Adrenal gland (tissue), 19 donors: ENCODE measurements at regions of chr13 and their contacts with region 1.

Region 1: GRCh38 chr13:113275387-113275786 is 21.7 kb upstream of the LAMP1 start:
- DNase-seq: peak; percentile 37 to 80 (median 68)
- H3K4me3 ChIP-seq: no peak overlapping the region
- H3K27ac ChIP-seq: no peak overlapping the region
- H3K4me1 ChIP-seq: no peaks in the 10 kb centered on the region
- H3K27me3 ChIP-seq: no peaks in the 10 kb centered on the region
- CTCF ChIP-seq: peak; percentile 40 to 72 (median 62)
- POLR2A ChIP-seq: no peak

Region 2: GRCh38 chr13:113374511-113375175 is 99.3 kb after region 1 on chr13:
- intact Hi-C with region 1: loop called in 1 of 2 experiments (anchors 5 kb)
- DNase-seq: peak in 1 of 7 donors; percentile 36
- H3K4me3 ChIP-seq: no peak overlapping the region
- H3K27ac ChIP-seq: no peak overlapping the region
- H3K4me1 ChIP-seq: no peaks in the 10 kb centered on the region
- H3K27me3 ChIP-seq: peaks cover 8% of the 10 kb centered on the region
- CTCF ChIP-seq: no peak
- POLR2A ChIP-seq: no peak

Region 3: GRCh38 chr13:113393563-113394338 is 118.4 kb after region 1 on chr13:
- intact Hi-C with region 1: loop called (anchors 5 to 10 kb)
- DNase-seq: peak; percentile 66 to 88 (median 81)
- H3K4me3 ChIP-seq: peak overlapping the region in 3 of 4 donors; percentile 46 to 94 (median 56)
- H3K27ac ChIP-seq: peak overlapping the region in 1 of 5 donors; percentile 45
- H3K4me1 ChIP-seq: peaks cover 4 to 11% of the 10 kb centered on the region in 2 donors
- H3K27me3 ChIP-seq: no peaks in the 10 kb centered on the region
- CTCF ChIP-seq: peak in 5 of 6 experiments; percentile 15 to 97 (median 92)
- POLR2A ChIP-seq: no peak